ENCODE measurements at regions of chr3 and their contacts with region 1.

Region 1: GRCh38 chr3:136142592-136142991 is 53.5 kb downstream of the MSL2 start:
- DNase-seq: peak; percentile 43
- H3K4me3 ChIP-seq: no peak overlapping the region
- H3K27ac ChIP-seq: peak overlapping the region; percentile 58
- H3K27me3 ChIP-seq: no peaks in the 10 kb centered on the region
- CTCF ChIP-seq: no peak

Region 2: GRCh38 chr3:136184703-136185102 is 42.1 kb after region 1 on chr3:
- CTCF ChIA-PET with region 1: no interaction called
- POLR2A ChIA-PET with region 1: interaction called, 11 read pairs
- DNase-seq: no peak
- H3K4me3 ChIP-seq: no peak overlapping the region
- H3K27ac ChIP-seq: no peak overlapping the region
- H3K27me3 ChIP-seq: no peaks in the 10 kb centered on the region
- CTCF ChIP-seq: no peak

Region 3: GRCh38 chr3:136753326-136753939 is 610.8 kb after region 1 on chr3:
- CTCF ChIA-PET with region 1: no interaction called
- POLR2A ChIA-PET with region 1: no interaction called
- DNase-seq: no peak
- H3K4me3 ChIP-seq: peak overlapping the region; percentile 70
- H3K27ac ChIP-seq: peak overlapping the region; percentile 99
- H3K27me3 ChIP-seq: no peaks in the 10 kb centered on the region
- CTCF ChIP-seq: no peak

Measured in AG04450 (cell line).